K562 (cell line): ENCODE measurements at regions of chr1 and their contacts with region 1.

Region 1: GRCh38 chr1:208238710-208239472 is 5.3 kb downstream of the PLXNA2 start:
- DNase-seq: peak; percentile 71 to 82 (median 72)
- ATAC-seq: peak; percentile 68
- H3K4me3 ChIP-seq: no peak overlapping the region
- H3K27ac ChIP-seq: no peak overlapping the region
- H3K4me1 ChIP-seq: peaks cover 34 to 37% of the 10 kb centered on the region in 2 experiments; a peak in 4 of 5 replicates
- H3K27me3 ChIP-seq: peaks cover 10 to 19% of the 10 kb centered on the region in 2 experiments; a peak in 4 of 5 replicates
- CTCF ChIP-seq: peak; percentile 76 to 81 (median 79)
- EP300 ChIP-seq: peak; percentile 12; the same call in 1 of the 2 replicates
- POLR2A ChIP-seq: no peak
- RAD21 ChIP-seq: peak; percentile 48 to 57

Region 2: GRCh38 chr1:207908107-207908734 is 330.7 kb before region 1 on chr1:
- CTCF ChIA-PET with region 1: no interaction called
- POLR2A ChIA-PET with region 1: no interaction called
- in situ Hi-C with region 1: no loop called
- intact Hi-C with region 1: loop called (anchors 10 kb)
- DNase-seq: peak in 2 of 4 experiments; percentile 51 to 57
- ATAC-seq: peak; percentile 74
- H3K4me3 ChIP-seq: no peak overlapping the region
- H3K27ac ChIP-seq: no peak overlapping the region
- H3K4me1 ChIP-seq: peaks cover 11 to 18% of the 10 kb centered on the region in 2 experiments; a peak in 4 of 5 replicates
- H3K27me3 ChIP-seq: 0 out of 5 replicates have a peak, but pooled peaks cover 2 to 11% of the 10 kb centered on the region in 2 experiments
- CTCF ChIP-seq: peak; percentile 29 to 59 (median 48); a peak in 4 of 6 replicates
- EP300 ChIP-seq: no peak
- POLR2A ChIP-seq: no peak
- RAD21 ChIP-seq: peak; percentile 77 to 82

Region 3: GRCh38 chr1:208132287-208132883 is 106.5 kb before region 1 on chr1:
- CTCF ChIA-PET with region 1: interaction called, 22 read pairs
- POLR2A ChIA-PET with region 1: interaction called, 4 read pairs
- in situ Hi-C with region 1: no loop called
- intact Hi-C with region 1: loop called (anchors 1 kb)
- DNase-seq: peak; percentile 91 to 96 (median 93)
- ATAC-seq: peak; percentile 100
- H3K4me3 ChIP-seq: no peak overlapping the region
- H3K27ac ChIP-seq: no peak overlapping the region
- H3K4me1 ChIP-seq: no peaks in the 10 kb centered on the region; a peak in 2 of 5 replicates
- H3K27me3 ChIP-seq: peaks cover 13 to 47% of the 10 kb centered on the region in 2 experiments; a peak in 4 of 5 replicates
- CTCF ChIP-seq: peak; percentile 95 to 98 (median 98)
- EP300 ChIP-seq: peak; percentile 25; the same call in 1 of the 2 replicates
- POLR2A ChIP-seq: no peak
- RAD21 ChIP-seq: peak; percentile 83 to 88

Region 4: GRCh38 chr1:208184088-208184911 is 54.6 kb before region 1 on chr1:
- CTCF ChIA-PET with region 1: no interaction called
- POLR2A ChIA-PET with region 1: interaction called, 6 read pairs
- in situ Hi-C with region 1: no loop called
- intact Hi-C with region 1: loop called (anchors 2 kb)
- DNase-seq: peak; percentile 80 to 95 (median 86)
- ATAC-seq: peak; percentile 93
- H3K4me3 ChIP-seq: no peak overlapping the region
- H3K27ac ChIP-seq: no peak overlapping the region
- H3K4me1 ChIP-seq: peaks cover 49 to 54% of the 10 kb centered on the region in 2 experiments
- H3K27me3 ChIP-seq: no peaks in the 10 kb centered on the region
- CTCF ChIP-seq: peak in 1 of 3 experiments; percentile 6; a peak in 1 of 6 replicates
- EP300 ChIP-seq: peak; percentile 83; the same call in 1 of the 2 replicates
- POLR2A ChIP-seq: no peak
- RAD21 ChIP-seq: no peak; a peak in 1 of 4 replicates

Region 5: DNA sequence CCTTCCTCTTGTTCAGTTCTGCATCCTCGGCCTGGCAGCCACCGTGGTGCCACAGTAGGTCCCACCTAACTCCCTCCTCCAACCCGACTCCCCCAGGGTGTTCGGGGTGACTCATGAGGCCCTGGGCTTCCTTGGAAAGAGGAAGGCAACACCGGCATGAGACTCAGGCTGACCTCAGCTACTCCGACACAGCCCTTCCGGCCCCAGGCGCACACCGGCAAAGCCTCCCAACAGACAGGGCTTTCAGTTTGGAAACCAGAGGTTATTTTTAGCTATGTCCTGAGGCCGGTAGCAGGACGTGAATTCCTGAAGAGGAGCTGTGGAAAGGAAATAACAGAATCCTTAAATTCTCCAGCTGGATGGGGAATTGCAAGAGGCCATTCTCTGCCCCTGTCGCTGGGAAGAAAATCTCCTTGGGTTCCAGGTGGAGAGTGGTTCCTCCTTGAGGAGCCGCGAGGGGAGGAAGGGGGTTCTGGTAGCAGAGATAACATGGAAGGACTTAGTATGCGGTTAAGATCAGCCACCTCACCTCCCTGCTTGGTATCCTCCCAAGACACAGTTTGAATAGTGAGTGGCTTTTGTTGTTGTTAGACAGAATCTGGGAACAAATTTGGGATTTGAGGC is 19.1 kb before region 1 on chr1:
- CTCF ChIA-PET with region 1: no interaction called
- POLR2A ChIA-PET with region 1: interaction called, 17 read pairs
- in situ Hi-C with region 1: no loop called
- intact Hi-C with region 1: no loop called
- DNase-seq: peak; percentile 91 to 96 (median 95)
- ATAC-seq: peak; percentile 87
- H3K4me3 ChIP-seq: peak overlapping the region; percentile 8; the same call in 1 of the 2 replicates
- H3K27ac ChIP-seq: peak overlapping the region; percentile 88
- H3K4me1 ChIP-seq: peaks cover 51 to 63% of the 10 kb centered on the region in 2 experiments
- H3K27me3 ChIP-seq: no peaks in the 10 kb centered on the region; a peak in 1 of 5 replicates
- CTCF ChIP-seq: no peak
- EP300 ChIP-seq: peak; percentile 87
- POLR2A ChIP-seq: peak; percentile 59
- RAD21 ChIP-seq: no peak; a peak in 1 of 4 replicates

Region 6: GRCh38 chr1:208289716-208290115 is 50.8 kb after region 1 on chr1:
- CTCF ChIA-PET with region 1: no interaction called
- POLR2A ChIA-PET with region 1: no interaction called
- in situ Hi-C with region 1: no loop called
- intact Hi-C with region 1: no loop called
- DNase-seq: no peak
- ATAC-seq: no peak
- H3K4me3 ChIP-seq: no peak overlapping the region
- H3K27ac ChIP-seq: no peak overlapping the region
- H3K4me1 ChIP-seq: no peaks in the 10 kb centered on the region
- H3K27me3 ChIP-seq: peaks cover 0 to 4% of the 10 kb centered on the region in 2 experiments; a peak in 2 of 5 replicates
- CTCF ChIP-seq: no peak
- EP300 ChIP-seq: no peak
- POLR2A ChIP-seq: no peak
- RAD21 ChIP-seq: no peak